Right ventricle myocardium inferior (tissue), 1 donor: ENCODE measurements at regions of chr9 and their contacts with region 1.

Region 1: GRCh38 chr9:69056191-69056815 is 20.8 kb downstream of the FXN start:
- DNase-seq: no peak
- ATAC-seq: no peak

Region 2: DNA sequence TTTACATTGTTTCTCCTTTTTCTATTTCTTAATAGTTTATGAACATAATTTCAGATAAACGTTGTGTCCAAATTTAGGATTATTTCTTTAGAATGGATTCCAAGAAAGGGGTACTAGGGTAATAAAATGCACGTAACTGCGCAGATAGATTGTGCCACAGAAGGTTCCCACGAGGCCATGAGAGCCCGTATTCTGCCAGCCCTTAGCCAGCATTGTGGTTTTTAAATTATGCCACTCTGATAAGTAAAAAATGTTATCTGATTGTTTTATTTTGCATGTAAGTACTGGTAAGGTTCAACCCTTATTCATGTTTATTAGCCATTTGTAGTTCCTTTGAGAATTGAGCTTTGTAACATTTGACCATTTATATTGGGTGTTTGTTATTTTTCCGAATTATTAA is 131.1 kb before region 1 on chr9:
- intact Hi-C with region 1: no loop called
- DNase-seq: no peak
- ATAC-seq: no peak

Region 3: GRCh38 chr9:69121828-69122548 is 65.7 kb after region 1 on chr9:
- intact Hi-C with region 1: loop called (anchors 2 kb)
- DNase-seq: peak; percentile 85
- ATAC-seq: peak; percentile 85

Region 4: GRCh38 chr9:69193685-69194032 is 137.4 kb after region 1 on chr9:
- intact Hi-C with region 1: loop called (anchors 1 kb)
- DNase-seq: no peak
- ATAC-seq: no peak

Region 5: DNA sequence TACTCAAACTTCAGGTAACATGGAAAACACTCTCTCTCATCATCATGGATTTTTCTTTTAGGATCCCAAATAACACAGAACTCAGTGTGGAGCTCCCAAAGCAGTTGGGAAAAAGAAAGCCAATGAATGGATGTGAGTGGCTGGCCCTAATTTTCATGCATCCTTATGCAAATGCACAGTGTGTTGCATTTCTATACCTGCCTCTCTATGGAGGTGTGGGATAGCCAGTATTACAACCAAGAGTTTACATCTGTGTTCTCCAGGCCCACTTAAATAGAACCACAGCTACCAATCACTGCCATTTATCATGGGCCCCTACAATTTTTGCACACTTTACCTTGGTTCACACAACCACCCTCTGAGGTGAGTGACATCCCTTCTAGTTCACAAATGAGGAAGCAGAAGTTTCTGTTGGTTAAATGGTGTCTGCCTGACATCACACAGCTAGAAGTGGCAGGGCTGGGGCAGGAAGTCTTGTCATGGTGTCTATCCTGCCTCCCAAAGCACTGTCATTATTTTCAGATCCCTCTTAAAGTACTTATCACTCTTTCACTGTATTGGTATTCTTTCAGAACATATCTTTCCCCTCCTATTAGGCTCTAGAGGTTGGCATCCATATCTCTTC is 1004.7 kb after region 1 on chr9:
- intact Hi-C with region 1: no loop called
- DNase-seq: no peak
- ATAC-seq: no peak